ENCODE measurements at regions of chr10 and their contacts with region 1.

Region 1: DNA sequence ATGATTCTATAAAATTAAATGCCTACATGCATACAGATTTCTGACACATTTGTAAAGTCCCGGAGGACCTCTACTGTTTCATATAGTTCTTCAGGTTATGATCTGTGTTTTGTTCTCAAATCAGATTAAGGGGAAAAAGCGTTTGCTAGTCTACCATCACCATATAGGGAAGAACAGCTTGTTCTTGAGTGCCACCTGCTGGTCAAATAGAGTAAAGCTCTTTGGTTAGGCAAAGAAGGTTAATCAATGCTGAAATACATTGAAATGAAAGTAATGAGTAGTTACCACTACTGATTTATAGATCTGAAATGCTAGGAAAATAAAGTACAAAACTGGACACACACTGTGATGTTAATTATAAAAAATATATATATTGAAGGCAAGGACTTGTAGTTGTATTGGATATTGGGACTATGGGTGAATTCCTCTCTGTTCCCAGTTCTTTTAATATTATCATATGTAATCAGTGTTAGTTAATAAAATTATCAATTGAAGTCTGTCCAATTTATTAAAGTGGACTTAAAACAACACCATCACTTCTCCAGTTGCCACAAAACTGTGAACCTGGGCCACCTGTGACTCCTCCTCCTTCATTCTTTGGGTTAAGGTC is 72.6 kb upstream of the PDLIM1 start:
- DNase-seq: peak; percentile 70
- H3K4me3 ChIP-seq: no peak overlapping the region; a peak in 1 of 4 replicates
- H3K27ac ChIP-seq: no peak overlapping the region
- H3K4me1 ChIP-seq: no peaks in the 10 kb centered on the region
- H3K27me3 ChIP-seq: no peaks in the 10 kb centered on the region
- CTCF ChIP-seq: peak; percentile 96
- EP300 ChIP-seq: no peak
- RAD21 ChIP-seq: peak; percentile 98

Region 2: GRCh38 chr10:94963901-94964300 is 399.5 kb before region 1 on chr10:
- CTCF ChIA-PET with region 1: interaction called, 13 read pairs
- POLR2A ChIA-PET with region 1: no interaction called
- DNase-seq: peak; percentile 7
- H3K4me3 ChIP-seq: no peak overlapping the region; a peak in 1 of 4 replicates
- H3K27ac ChIP-seq: no peak overlapping the region
- H3K4me1 ChIP-seq: no peaks in the 10 kb centered on the region
- H3K27me3 ChIP-seq: no peaks in the 10 kb centered on the region
- CTCF ChIP-seq: peak; percentile 62
- EP300 ChIP-seq: no peak
- RAD21 ChIP-seq: peak; percentile 49

Region 3: GRCh38 chr10:95183271-95184230 is 179.9 kb before region 1 on chr10:
- CTCF ChIA-PET with region 1: interaction called, 25 read pairs
- POLR2A ChIA-PET with region 1: no interaction called
- DNase-seq: peak; percentile 96
- H3K4me3 ChIP-seq: peak overlapping the region; percentile 70 to 75
- H3K27ac ChIP-seq: peak overlapping the region; percentile 44 to 67; a peak in 3 of 4 replicates
- H3K4me1 ChIP-seq: no peaks in the 10 kb centered on the region; a peak in 1 of 4 replicates
- H3K27me3 ChIP-seq: no peaks in the 10 kb centered on the region
- CTCF ChIP-seq: peak; percentile 87
- EP300 ChIP-seq: 0 out of 4 replicates have a peak, but pooled peaks of 1 of the 2 experiments have one; percentile 48
- RAD21 ChIP-seq: peak; percentile 64

Region 4: GRCh38 chr10:95273393-95274312 is 89.8 kb before region 1 on chr10:
- CTCF ChIA-PET with region 1: interaction called, 13 read pairs
- POLR2A ChIA-PET with region 1: no interaction called
- DNase-seq: no peak
- H3K4me3 ChIP-seq: peak overlapping the region in 1 of 2 experiments; percentile 23; a peak in 2 of 4 replicates
- H3K27ac ChIP-seq: peak overlapping the region; percentile 43 to 92; a peak in 3 of 4 replicates
- H3K4me1 ChIP-seq: peaks cover 5 to 26% of the 10 kb centered on the region in 2 experiments; a peak in 2 of 4 replicates
- H3K27me3 ChIP-seq: no peaks in the 10 kb centered on the region
- CTCF ChIP-seq: no peak
- EP300 ChIP-seq: 0 out of 4 replicates have a peak, but pooled peaks of 1 of the 2 experiments have one; percentile 11
- RAD21 ChIP-seq: no peak

Region 5: DNA sequence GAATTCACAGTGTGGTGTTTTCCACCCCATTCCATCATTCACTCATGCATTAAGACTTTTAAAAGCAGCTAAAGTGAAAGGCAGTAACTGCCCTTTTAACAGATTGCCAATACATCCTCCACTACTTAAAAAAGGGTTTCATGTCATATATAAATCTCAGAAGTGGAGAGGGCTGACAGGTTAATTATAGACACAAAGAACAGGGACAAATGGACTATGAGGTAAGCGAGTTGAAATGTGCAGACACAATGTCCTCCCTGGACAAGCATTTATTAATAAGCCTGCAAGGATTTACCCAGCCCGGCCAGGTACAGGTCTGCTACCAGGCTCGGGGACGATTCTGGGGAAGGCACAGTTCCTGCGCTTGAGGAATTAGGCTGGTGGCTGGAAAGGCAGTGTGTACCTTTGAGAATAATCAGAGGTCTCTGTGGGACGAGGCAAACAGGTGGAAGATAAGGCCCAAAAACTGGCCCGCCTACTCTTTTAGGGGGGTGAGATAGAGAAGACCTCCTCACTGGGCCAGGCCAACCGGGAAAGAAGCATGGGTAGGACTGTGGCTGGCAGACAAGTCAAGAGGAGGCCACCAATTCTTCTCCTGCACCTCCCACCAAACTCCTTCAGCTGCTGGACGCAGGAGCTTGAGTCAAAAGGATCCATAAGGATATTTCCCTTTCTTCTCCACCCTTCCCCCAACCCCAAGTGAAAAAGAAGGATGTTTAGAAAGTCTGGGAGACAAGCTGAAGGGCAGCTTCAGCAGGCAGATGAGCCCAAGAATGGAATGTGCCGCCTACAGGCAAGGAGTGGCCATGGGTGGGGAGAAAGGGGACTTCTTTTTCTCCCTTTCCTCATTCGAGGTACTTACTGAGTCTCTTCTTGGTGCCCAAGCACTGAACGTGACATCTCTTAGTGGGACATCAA is 74.1 kb before region 1 on chr10:
- CTCF ChIA-PET with region 1: interaction called, 16 read pairs
- POLR2A ChIA-PET with region 1: interaction called, 3 read pairs
- DNase-seq: no peak
- H3K4me3 ChIP-seq: peak overlapping the region; percentile 85 to 94; a peak in 3 of 4 replicates
- H3K27ac ChIP-seq: no peak overlapping the region
- H3K4me1 ChIP-seq: peaks cover 3 to 4% of the 10 kb centered on the region in 2 experiments; a peak in 1 of 4 replicates
- H3K27me3 ChIP-seq: no peaks in the 10 kb centered on the region
- CTCF ChIP-seq: 0 out of 2 replicates have a peak, but pooled peaks have one; percentile 15
- EP300 ChIP-seq: no peak
- RAD21 ChIP-seq: no peak

Region 6: DNA sequence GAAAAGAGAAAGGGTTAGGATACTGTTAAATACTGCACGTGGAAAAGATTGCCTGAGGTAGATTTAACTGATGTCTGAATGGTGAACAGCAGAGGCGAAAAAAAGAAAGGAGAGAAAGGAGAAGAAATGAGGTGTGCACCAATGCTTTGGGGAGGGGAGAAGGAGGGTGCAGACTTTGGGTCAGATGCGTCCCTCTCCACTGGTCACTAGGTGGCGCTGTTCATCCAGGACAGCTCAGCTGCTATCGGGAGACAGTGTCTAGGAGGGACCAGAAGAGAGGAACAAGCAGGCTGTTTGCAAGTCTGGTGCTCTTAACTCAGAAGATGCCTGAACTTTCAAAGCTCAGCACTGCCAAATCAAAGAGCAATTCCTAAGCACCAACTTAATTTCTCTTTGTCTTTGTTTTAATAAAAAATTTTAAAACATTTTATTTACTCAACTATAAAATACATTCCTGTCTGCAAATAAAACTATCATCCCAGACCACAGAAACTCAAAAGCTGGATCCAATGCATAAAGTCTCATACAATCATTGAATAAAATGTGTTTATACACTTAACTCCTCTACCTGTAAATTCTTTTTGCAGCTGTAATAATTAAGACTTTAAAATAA is 11.3 kb after region 1 on chr10:
- CTCF ChIA-PET with region 1: interaction called, 100 read pairs
- POLR2A ChIA-PET with region 1: no interaction called
- DNase-seq: peak; percentile 73
- H3K4me3 ChIP-seq: peak overlapping the region in 1 of 2 experiments; percentile 31; a peak in 1 of 4 replicates
- H3K27ac ChIP-seq: no peak overlapping the region
- H3K4me1 ChIP-seq: peaks cover 0 to 8% of the 10 kb centered on the region in 2 experiments; a peak in 2 of 4 replicates
- H3K27me3 ChIP-seq: peaks cover 10% of the 10 kb centered on the region; the same call in 1 of the 2 replicates
- CTCF ChIP-seq: peak; percentile 72
- EP300 ChIP-seq: no peak
- RAD21 ChIP-seq: peak; percentile 96

Region 7: DNA sequence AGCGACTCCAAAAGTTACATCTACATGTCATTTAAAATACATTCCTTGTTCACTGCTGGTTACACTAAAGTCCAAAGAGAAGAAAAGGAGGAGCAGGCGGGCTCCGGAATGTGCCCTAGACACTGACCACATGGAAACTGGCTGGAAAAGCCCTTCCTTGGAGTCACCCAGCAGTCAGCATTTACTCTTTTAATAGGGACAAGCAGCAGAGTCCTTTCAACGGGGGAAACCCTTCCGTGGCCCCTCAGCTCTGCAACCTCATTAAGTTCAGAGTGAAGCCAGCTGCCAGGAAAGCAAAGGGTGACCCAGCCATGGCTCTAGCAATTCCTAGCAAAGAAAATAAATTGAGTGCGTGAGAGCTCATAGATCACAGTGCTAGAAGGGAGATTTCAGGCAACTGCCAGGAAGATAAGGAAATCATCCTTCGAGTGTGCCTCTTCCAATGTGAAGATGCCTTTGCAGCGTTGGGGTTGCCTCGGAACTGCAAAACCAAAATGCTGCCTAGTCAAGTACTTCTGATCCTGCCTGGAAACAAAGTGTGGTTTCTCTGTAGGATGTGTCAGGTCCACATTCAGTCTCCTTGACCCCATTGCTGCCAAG is 96.1 kb after region 1 on chr10:
- CTCF ChIA-PET with region 1: no interaction called
- POLR2A ChIA-PET with region 1: no interaction called
- DNase-seq: no peak
- H3K4me3 ChIP-seq: no peak overlapping the region
- H3K27ac ChIP-seq: no peak overlapping the region
- H3K4me1 ChIP-seq: no peaks in the 10 kb centered on the region; a peak in 1 of 4 replicates
- H3K27me3 ChIP-seq: 0 out of 2 replicates have a peak, but pooled peaks cover 4% of the 10 kb centered on the region
- CTCF ChIP-seq: no peak
- EP300 ChIP-seq: no peak
- RAD21 ChIP-seq: no peak

Region 8: DNA sequence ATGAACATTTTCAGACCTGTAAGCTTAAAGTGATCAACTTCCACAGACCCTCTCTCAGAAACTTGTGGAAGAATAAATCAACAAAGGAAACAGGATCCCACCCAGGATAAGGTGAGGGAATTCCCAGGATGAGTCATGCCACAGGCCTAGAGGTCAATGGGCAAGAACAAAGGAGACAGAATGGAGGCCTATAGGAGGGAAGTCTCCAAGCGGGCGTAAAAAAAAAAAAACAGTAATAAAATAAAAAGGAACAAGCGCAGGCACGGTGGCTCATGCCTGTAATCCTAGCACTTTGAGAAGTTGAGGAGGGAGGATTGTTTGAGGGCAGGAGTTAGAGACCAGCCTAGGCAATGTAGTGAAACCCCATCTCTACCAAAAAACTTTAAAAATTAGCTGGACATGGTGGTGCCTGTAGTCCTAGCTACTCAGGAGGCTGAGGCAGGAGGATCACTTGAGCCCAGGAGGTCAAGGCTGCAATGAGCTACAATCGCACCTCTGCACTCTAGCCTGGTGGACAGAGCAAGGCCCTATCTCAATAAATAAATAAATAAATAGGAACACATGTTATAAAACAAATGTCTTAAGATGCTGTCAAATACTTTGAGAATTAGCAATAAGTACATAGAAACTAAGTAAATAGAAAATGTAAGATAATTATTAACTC is 189.4 kb after region 1 on chr10:
- CTCF ChIA-PET with region 1: no interaction called
- POLR2A ChIA-PET with region 1: no interaction called
- DNase-seq: no peak
- H3K4me3 ChIP-seq: no peak overlapping the region
- H3K27ac ChIP-seq: no peak overlapping the region
- H3K4me1 ChIP-seq: no peaks in the 10 kb centered on the region
- H3K27me3 ChIP-seq: no peaks in the 10 kb centered on the region; the same call in 1 of the 2 replicates
- CTCF ChIP-seq: no peak
- EP300 ChIP-seq: no peak
- RAD21 ChIP-seq: no peak

Measured in SK-N-SH (cell line).